ENCODE measurements at regions of chr1 and their contacts with region 1.

Region 1: GRCh38 chr1:112619520-112620376 is at the start of gene CAPZA1:
- DNase-seq: peak; percentile 95
- ATAC-seq: peak; percentile 85
- H3K4me3 ChIP-seq: peak within 1 kb of the TSS; percentile 69 to 97 (median 91)
- H3K4me3 Mint-ChIP-seq: peak within 1 kb of the TSS; percentile 97
- H3K27ac ChIP-seq: peak within 1 kb of the TSS; percentile 94 to 99
- H3K27ac Mint-ChIP-seq: peak within 1 kb of the TSS; percentile 99
- H3K4me1 ChIP-seq: peaks cover 37 to 42% of the 10 kb centered on the region in 2 donors
- H3K4me1 Mint-ChIP-seq: peaks cover 46% of the 10 kb centered on the region
- H3K27me3 ChIP-seq: no peaks in the 10 kb centered on the region
- H3K27me3 Mint-ChIP-seq: no peaks in the 10 kb centered on the region
- CTCF ChIP-seq: no peak
- total RNA-seq, gene CAPZA1: 172 and 182 TPM in 2 replicates

Region 2: GRCh38 chr1:112188611-112189010 is 431.1 kb before region 1 on chr1:
- CTCF ChIA-PET with region 1: no interaction called
- POLR2A ChIA-PET with region 1: no interaction called
- intact Hi-C with region 1: no loop called
- DNase-seq: no peak
- ATAC-seq: no peak
- H3K4me3 ChIP-seq: no peak overlapping the region
- H3K4me3 Mint-ChIP-seq: no peak overlapping the region
- H3K27ac ChIP-seq: no peak overlapping the region
- H3K27ac Mint-ChIP-seq: no peak overlapping the region
- H3K4me1 ChIP-seq: no peaks in the 10 kb centered on the region
- H3K4me1 Mint-ChIP-seq: no peaks in the 10 kb centered on the region
- H3K27me3 ChIP-seq: no peaks in the 10 kb centered on the region
- H3K27me3 Mint-ChIP-seq: peaks cover 13% of the 10 kb centered on the region
- CTCF ChIP-seq: no peak

Region 3: GRCh38 chr1:112237980-112238545 is 381.7 kb before region 1 on chr1:
- CTCF ChIA-PET with region 1: no interaction called
- POLR2A ChIA-PET with region 1: no interaction called
- intact Hi-C with region 1: no loop called
- DNase-seq: no peak
- ATAC-seq: no peak
- H3K4me3 ChIP-seq: no peak overlapping the region
- H3K4me3 Mint-ChIP-seq: no peak overlapping the region
- H3K27ac ChIP-seq: no peak overlapping the region
- H3K27ac Mint-ChIP-seq: no peak overlapping the region
- H3K4me1 ChIP-seq: no peaks in the 10 kb centered on the region
- H3K4me1 Mint-ChIP-seq: no peaks in the 10 kb centered on the region
- H3K27me3 ChIP-seq: peaks cover 0 to 3% (median 0%) of the 10 kb centered on the region in 4 experiments
- H3K27me3 Mint-ChIP-seq: peaks cover 25% of the 10 kb centered on the region
- CTCF ChIP-seq: no peak

Region 4: DNA sequence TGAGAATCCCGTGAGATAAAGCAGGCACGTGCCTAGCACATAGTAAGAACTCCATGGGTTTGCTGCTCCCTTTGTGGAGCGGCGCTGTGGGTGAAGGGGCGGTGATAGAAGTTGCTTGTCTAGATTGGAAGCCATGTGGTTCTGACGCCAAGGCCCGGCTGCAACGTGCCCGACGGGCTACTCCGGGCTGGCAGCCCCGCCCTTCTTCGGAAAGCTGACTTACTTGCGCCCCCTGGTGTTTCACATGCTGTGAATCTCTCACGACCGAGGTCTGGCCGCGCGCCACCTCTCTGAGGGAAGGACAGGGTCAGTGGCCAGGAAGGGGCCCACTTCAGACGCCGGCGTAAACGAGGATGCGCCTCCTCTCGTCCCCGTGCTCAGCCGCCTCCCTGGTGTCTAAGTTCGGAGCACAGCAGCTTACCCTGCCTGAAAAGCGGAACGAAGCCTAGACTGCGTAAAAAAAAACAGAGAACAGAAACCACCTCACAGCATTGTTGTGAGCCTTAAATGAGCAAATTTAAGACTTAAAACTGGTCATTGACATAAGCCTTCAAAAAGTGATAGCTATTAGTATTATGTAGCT is 153.6 kb before region 1 on chr1:
- CTCF ChIA-PET with region 1: interaction called, 9 read pairs
- POLR2A ChIA-PET with region 1: interaction called, 4 read pairs
- intact Hi-C with region 1: loop called (anchors 2 kb)
- DNase-seq: peak; percentile 94
- ATAC-seq: peak; percentile 97
- H3K4me3 ChIP-seq: peak overlapping the region; percentile 5 to 51 (median 50)
- H3K4me3 Mint-ChIP-seq: peak overlapping the region; percentile 83
- H3K27ac ChIP-seq: peak overlapping the region; percentile 74 to 75
- H3K27ac Mint-ChIP-seq: peak overlapping the region; percentile 83
- H3K4me1 ChIP-seq: peaks cover 27 to 40% of the 10 kb centered on the region in 2 donors
- H3K4me1 Mint-ChIP-seq: peaks cover 46% of the 10 kb centered on the region
- H3K27me3 ChIP-seq: peaks cover 0 to 21% (median 12%) of the 10 kb centered on the region in 4 experiments
- H3K27me3 Mint-ChIP-seq: peaks cover 19% of the 10 kb centered on the region
- CTCF ChIP-seq: peak; percentile 75

Region 5: DNA sequence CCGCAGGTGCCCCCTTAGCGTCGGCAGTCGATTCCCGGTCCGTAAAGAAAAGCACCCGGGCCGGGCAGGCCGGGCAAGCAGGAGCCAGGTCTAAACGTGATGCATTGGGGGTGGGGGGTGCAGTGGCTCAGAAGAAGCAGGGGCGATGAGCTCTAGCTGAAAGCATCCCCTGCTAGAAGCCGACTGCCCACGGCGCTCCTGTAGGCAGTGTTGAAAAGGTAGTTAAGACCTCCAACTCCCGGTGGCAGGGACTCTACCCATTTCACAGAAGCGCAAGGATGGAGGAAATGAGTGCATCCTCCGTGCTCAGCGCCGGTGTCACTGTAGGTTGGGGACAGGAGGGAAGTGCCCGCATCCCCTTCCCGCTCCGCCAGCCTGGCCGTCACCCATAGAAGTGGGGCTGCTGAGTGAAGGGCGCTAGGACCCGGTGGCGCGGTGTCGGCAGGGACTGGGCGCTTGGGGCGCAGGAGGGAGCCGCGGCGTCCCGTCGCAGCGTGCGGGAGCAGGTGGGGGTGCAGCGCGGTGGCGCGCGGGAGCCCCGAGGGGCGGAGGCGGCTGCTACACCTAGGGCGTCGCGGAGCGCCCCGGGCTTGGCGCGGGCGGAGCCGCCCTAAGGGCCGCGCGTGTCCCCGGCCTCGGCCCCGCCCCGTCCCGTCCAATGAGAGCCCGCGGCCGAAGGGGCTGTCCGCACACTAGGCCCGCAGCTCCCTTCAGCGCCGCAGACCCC is 111.3 kb before region 1 on chr1 and contains the start of gene WNT2B:
- CTCF ChIA-PET with region 1: no interaction called
- POLR2A ChIA-PET with region 1: no interaction called
- intact Hi-C with region 1: loop called (anchors 2 kb)
- DNase-seq: peak; percentile 71
- ATAC-seq: peak; percentile 63
- H3K4me3 ChIP-seq: peak within 1 kb of the TSS; percentile 35 to 67 (median 56)
- H3K4me3 Mint-ChIP-seq: peak within 1 kb of the TSS; percentile 89
- H3K27ac ChIP-seq: no peak within 1 kb of the TSS
- H3K27ac Mint-ChIP-seq: peak within 1 kb of the TSS; percentile 46
- H3K4me1 ChIP-seq: peaks cover 36 to 49% of the 10 kb centered on the region in 2 donors
- H3K4me1 Mint-ChIP-seq: peaks cover 36% of the 10 kb centered on the region
- H3K27me3 ChIP-seq: peaks cover 0 to 63% (median 14%) of the 10 kb centered on the region in 4 experiments
- H3K27me3 Mint-ChIP-seq: peaks cover 17% of the 10 kb centered on the region
- CTCF ChIP-seq: no peak
- total RNA-seq, gene WNT2B: 5.2 and 5.9 TPM in 2 replicates

Region 6: DNA sequence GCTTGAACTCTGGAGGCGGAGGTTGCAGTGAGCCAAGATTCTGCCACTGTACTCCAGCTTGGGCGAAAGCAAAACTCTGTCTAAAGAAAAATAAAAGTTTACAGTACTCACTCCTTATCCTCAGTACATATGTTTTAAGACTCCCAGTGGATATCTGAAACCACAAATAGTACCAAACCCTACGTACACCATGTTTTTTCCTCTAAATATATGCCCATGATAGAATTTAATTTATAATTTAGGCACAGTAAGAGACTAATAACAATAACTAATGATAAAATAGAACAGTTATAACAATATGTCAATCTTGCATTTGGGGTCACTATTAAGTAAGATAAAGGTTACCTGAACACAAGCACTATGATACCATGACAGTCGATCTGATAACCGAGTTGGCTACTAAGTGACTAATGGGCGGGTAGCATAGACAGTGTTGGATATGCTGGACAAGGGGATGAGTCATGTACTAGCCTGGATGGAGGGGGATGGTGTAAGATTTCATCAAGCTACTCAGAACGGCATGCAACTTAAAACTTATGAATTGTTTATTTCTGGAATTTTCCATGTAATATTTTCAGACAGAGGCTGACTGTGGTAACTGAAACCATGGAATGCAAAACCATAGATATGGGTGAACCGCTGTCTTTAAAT is 44.5 kb before region 1 on chr1:
- CTCF ChIA-PET with region 1: no interaction called
- POLR2A ChIA-PET with region 1: no interaction called
- intact Hi-C with region 1: no loop called
- DNase-seq: no peak
- ATAC-seq: no peak
- H3K4me3 ChIP-seq: no peak overlapping the region
- H3K4me3 Mint-ChIP-seq: no peak overlapping the region
- H3K27ac ChIP-seq: no peak overlapping the region
- H3K27ac Mint-ChIP-seq: no peak overlapping the region
- H3K4me1 ChIP-seq: no peaks in the 10 kb centered on the region
- H3K4me1 Mint-ChIP-seq: no peaks in the 10 kb centered on the region
- H3K27me3 ChIP-seq: no peaks in the 10 kb centered on the region
- H3K27me3 Mint-ChIP-seq: no peaks in the 10 kb centered on the region
- CTCF ChIP-seq: no peak

Region 7: GRCh38 chr1:112637254-112638116 is 17.7 kb after region 1 on chr1:
- CTCF ChIA-PET with region 1: interaction called, 4 read pairs
- POLR2A ChIA-PET with region 1: interaction called, 3 read pairs
- intact Hi-C with region 1: loop called (anchors 2 kb)
- DNase-seq: no peak
- ATAC-seq: no peak
- H3K4me3 ChIP-seq: no peak overlapping the region
- H3K4me3 Mint-ChIP-seq: no peak overlapping the region
- H3K27ac ChIP-seq: peak overlapping the region in 1 of 2 donors; percentile 60
- H3K27ac Mint-ChIP-seq: peak overlapping the region; percentile 4
- H3K4me1 ChIP-seq: peaks cover 17 to 39% of the 10 kb centered on the region in 2 donors
- H3K4me1 Mint-ChIP-seq: peaks cover 49% of the 10 kb centered on the region
- H3K27me3 ChIP-seq: no peaks in the 10 kb centered on the region
- H3K27me3 Mint-ChIP-seq: no peaks in the 10 kb centered on the region
- CTCF ChIP-seq: no peak

Region 8: DNA sequence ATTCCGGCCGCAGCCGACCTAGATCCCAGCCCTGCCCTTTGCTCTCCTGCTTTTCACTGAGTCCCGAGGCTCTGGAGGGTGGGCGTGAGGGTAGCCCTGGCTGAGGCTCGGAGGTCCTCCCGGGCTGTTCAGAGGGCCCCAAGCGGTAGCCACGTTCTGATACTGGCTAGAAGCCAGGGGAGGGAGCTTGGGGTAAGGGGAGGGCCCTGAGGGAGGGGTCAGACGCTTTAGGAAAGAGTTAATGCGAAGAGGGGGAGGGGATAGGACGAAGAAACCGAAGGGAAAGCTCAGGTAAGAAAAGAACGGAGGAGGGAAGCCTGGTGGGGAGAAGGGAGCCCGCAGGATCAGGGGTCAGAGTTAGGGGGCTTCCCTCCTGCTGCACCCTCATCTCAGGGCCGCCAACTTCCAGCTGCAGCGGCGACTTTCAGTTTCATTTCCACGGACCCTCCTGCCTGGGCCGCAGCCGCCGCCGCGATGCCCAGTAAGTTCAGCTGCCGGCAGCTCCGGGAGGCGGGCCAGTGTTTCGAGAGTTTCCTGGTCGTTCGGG is 54.8 kb after region 1 on chr1 and contains the start of gene MOV10:
- CTCF ChIA-PET with region 1: interaction called, 9 read pairs
- POLR2A ChIA-PET with region 1: interaction called, 4 read pairs
- intact Hi-C with region 1: loop called (anchors 1 kb)
- DNase-seq: peak; percentile 76
- ATAC-seq: peak; percentile 63
- H3K4me3 ChIP-seq: peak within 1 kb of the TSS; percentile 42 to 86 (median 80)
- H3K4me3 Mint-ChIP-seq: peak within 1 kb of the TSS; percentile 94
- H3K27ac ChIP-seq: peak within 1 kb of the TSS; percentile 26 to 76
- H3K27ac Mint-ChIP-seq: peak within 1 kb of the TSS; percentile 92
- H3K4me1 ChIP-seq: peaks cover 25 to 30% of the 10 kb centered on the region in 2 donors
- H3K4me1 Mint-ChIP-seq: peaks cover 30% of the 10 kb centered on the region
- H3K27me3 ChIP-seq: no peaks in the 10 kb centered on the region
- H3K27me3 Mint-ChIP-seq: no peaks in the 10 kb centered on the region
- CTCF ChIP-seq: no peak
- total RNA-seq, gene MOV10: 46.2 and 51.2 TPM in 2 replicates

Region 9: DNA sequence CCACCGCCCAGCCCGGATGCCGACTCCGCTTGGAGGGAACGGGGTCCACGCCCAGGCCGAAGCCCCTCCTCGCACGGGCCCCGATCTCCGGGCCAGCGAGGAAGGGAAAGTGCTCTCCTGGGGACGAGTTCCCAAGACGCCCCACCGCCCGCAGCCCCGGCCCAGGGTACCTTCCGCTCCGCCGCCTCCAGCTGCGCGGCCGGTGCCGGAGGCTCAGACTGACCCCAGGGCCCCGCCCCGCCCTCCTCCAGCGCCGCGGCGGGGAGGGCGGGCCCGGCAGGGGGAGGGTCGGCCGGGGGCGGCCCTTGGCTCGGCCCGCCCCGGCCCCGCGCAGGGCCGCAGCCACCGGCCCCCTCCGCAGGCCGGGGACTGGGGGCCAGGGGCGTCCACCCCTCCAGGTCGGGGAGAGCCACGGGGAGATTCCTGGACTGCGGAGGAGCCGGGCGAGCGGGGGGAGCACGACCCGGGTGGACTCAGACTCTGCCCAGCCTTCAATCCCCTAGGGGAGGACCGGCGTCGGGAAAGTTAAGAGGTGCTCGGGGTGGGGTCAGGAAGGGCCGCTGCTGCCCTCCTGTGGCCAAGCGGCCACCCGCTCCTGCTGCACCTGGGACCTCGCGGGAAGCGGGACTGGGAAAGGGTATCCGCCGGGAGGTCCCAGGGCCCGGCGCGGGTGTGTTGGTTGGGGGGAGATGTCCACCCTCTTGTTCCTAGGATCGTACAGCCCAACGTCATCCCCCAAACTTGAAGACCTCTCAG is 87.3 kb after region 1 on chr1 and contains the start of gene RHOC:
- CTCF ChIA-PET with region 1: interaction called, 9 read pairs
- POLR2A ChIA-PET with region 1: no interaction called
- intact Hi-C with region 1: loop called (anchors 2 kb)
- DNase-seq: peak; percentile 81
- ATAC-seq: peak; percentile 85
- H3K4me3 ChIP-seq: peak within 1 kb of the TSS in 4 of 5 experiments; percentile 56 to 74 (median 66)
- H3K4me3 Mint-ChIP-seq: peak within 1 kb of the TSS; percentile 88
- H3K27ac ChIP-seq: peak within 1 kb of the TSS in 1 of 2 donors; percentile 49
- H3K27ac Mint-ChIP-seq: peak within 1 kb of the TSS; percentile 81
- H3K4me1 ChIP-seq: peaks cover 34 to 46% of the 10 kb centered on the region in 2 donors
- H3K4me1 Mint-ChIP-seq: peaks cover 50% of the 10 kb centered on the region
- H3K27me3 ChIP-seq: no peaks in the 10 kb centered on the region
- H3K27me3 Mint-ChIP-seq: no peaks in the 10 kb centered on the region
- CTCF ChIP-seq: peak; percentile 72
- total RNA-seq, gene RHOC: 18.5 and 21.0 TPM in 2 replicates

Region 10: DNA sequence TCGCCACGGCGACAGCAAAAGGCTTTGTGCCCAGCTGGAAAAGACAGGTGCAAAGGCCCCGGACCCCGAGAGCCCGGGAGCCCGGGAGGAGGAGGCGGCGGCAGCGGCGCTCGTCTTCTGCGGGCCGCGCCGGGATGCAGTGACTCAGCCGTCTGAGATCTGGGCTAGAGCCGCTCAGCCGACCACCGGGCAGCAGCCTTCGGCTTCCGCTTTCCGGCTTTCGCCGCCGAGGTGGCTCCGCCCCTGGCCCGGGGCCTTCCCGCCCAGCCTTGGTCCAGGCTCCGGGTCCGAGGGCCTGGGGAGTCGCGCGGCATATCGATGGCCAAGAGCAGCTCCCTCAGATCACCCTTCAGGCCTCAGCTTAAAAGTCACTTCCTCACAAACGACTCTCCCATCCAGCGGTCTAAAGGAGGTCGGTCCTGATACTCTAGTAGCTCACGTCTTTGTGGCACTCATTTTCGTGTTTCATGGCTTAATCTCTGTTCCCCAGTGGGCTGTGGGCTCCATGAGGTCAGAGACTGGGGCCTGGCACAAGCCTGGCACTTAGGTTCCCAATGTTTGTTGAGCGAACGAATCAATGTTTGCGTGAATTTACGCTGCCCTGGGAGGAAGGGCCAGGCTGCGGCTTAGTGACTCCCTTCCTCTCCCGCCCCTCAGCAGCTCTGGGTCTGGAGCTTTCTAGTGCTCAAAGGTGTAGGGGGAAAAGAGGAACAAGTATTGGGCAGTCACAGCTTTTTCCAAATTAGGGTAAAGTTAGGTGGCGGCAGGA is 1139.8 kb after region 1 on chr1 and contains the start of gene PHTF1:
- CTCF ChIA-PET with region 1: no interaction called
- POLR2A ChIA-PET with region 1: no interaction called
- intact Hi-C with region 1: loop called (anchors 10 kb)
- DNase-seq: peak; percentile 80
- ATAC-seq: peak; percentile 84
- H3K4me3 ChIP-seq: peak within 1 kb of the TSS; percentile 76 to 93 (median 92)
- H3K4me3 Mint-ChIP-seq: peak within 1 kb of the TSS; percentile 99
- H3K27ac ChIP-seq: peak within 1 kb of the TSS; percentile 86 to 90
- H3K27ac Mint-ChIP-seq: peak within 1 kb of the TSS; percentile 99
- H3K4me1 ChIP-seq: peaks cover 6 to 20% of the 10 kb centered on the region in 2 donors
- H3K4me1 Mint-ChIP-seq: peaks cover 23% of the 10 kb centered on the region
- H3K27me3 ChIP-seq: no peaks in the 10 kb centered on the region
- H3K27me3 Mint-ChIP-seq: no peaks in the 10 kb centered on the region
- CTCF ChIP-seq: no peak
- total RNA-seq, gene PHTF1: 18.5 and 25.7 TPM in 2 replicates

Measured in B cell (primary cell).